CD4-positive, alpha-beta memory T cell (primary cell): ENCODE measurements at regions of chr11 and their contacts with region 1.

Region 1: DNA sequence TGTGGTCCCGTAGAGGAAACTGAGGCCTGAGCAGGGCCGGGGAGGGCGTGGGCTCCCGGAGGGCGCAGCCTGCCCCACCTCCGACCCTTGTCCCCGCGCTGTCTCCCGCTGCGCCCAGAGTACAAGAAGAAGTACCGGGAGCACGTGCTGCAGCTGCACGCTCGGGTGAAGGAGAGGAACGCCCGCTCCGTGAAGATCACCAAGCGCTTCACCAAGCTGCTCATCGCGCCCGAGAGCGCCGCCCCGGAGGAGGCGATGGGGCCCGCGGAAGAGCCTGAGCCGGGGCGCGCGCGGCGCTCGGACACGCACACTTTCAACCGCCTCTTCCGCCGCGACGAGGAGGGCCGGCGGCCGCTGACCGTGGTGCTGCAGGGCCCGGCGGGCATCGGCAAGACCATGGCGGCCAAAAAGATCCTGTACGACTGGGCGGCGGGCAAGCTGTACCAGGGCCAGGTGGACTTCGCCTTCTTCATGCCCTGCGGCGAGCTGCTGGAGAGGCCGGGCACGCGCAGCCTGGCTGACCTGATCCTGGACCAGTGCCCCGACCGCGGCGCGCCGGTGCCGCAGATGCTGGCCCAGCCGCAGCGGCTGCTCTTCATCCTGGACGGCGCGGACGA is 1.9 kb downstream of the NLRP6 start:
- DNase-seq: peak in 4 of 5 donors; percentile 55 to 61 (median 57)
- H3K4me3 ChIP-seq: peak overlapping the region in 1 of 2 donors; percentile 59
- H3K4me3 Mint-ChIP-seq: peak overlapping the region; percentile 84 to 91 (median 88)
- H3K27ac ChIP-seq: no peak overlapping the region
- H3K27ac Mint-ChIP-seq: peak overlapping the region in 4 of 7 donors; percentile 70 to 92 (median 84)
- H3K4me1 ChIP-seq: peaks cover 60% of the 10 kb centered on the region
- H3K4me1 Mint-ChIP-seq: peaks cover 30 to 61% (median 46%) of the 10 kb centered on the region in 4 donors
- H3K27me3 ChIP-seq: no peaks in the 10 kb centered on the region
- H3K27me3 Mint-ChIP-seq: no peaks in the 10 kb centered on the region

Region 2: DNA sequence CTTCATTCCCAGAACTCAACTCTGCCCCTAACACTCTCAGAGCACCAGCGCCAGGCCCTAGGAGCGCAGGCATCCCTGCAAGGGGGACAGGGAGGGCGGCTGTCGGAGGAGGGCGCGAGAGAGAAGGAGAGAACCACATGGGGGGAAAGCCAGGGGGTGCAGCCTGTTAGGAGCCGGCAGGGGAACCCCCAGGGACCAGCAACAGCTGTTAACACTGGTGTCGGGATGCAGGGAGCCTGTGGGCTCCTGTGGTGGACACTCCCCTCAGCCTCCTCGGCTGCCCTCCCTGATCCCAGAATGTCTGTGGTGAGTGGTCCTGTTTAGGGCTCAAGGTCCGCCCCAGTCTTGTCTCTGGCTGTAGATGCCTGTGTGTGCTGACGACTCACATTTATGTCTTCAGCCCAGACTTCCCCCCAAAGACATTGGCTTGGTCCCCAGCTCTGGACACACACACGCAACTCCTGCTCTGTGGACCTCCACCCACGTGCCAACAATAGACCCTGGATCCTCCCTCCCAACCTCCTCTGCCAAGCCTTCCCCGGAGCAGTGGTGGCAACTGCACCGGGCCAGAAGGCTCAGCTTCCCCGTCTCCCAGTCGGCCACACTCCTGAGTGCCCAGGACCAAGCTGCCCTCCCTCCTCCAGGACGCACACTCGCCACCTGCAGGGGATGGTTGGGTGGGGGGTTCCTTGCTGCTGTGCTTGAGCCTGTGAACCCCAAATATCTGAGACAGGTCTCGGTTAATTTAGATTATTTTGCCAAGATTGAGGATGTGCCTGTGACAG is 20.1 kb after region 1 on chr11:
- CTCF ChIA-PET with region 1: interaction called, 6 read pairs
- POLR2A ChIA-PET with region 1: interaction called, 148 read pairs
- intact Hi-C with region 1: no loop called
- DNase-seq: peak in 1 of 5 donors; percentile 19
- H3K4me3 ChIP-seq: no peak overlapping the region
- H3K4me3 Mint-ChIP-seq: no peak overlapping the region
- H3K27ac ChIP-seq: no peak overlapping the region
- H3K27ac Mint-ChIP-seq: peak overlapping the region in 3 of 7 donors; percentile 13 to 55 (median 35)
- H3K4me1 ChIP-seq: peaks cover 31% of the 10 kb centered on the region
- H3K4me1 Mint-ChIP-seq: peaks cover 11 to 43% (median 19%) of the 10 kb centered on the region in 4 donors
- H3K27me3 ChIP-seq: no peaks in the 10 kb centered on the region
- H3K27me3 Mint-ChIP-seq: peaks cover 0 to 3% of the 10 kb centered on the region in 2 donors